ENCODE measurements at regions of chr12 and their contacts with region 1.

Region 1: GRCh38 chr12:47837190-47838171 is 17.8 kb upstream of the HDAC7 start:
- DNase-seq: peak; percentile 62 to 89 (median 76)
- H3K4me3 ChIP-seq: no peak overlapping the region
- H3K27ac ChIP-seq: peak overlapping the region in 3 of 5 donors; percentile 2 to 46 (median 18)
- H3K4me1 ChIP-seq: peaks cover 7 to 17% of the 10 kb centered on the region in 2 donors
- H3K27me3 ChIP-seq: no peaks in the 10 kb centered on the region
- CTCF ChIP-seq: peak; percentile 91 to 98 (median 94)
- POLR2A ChIP-seq: no peak

Region 2: DNA sequence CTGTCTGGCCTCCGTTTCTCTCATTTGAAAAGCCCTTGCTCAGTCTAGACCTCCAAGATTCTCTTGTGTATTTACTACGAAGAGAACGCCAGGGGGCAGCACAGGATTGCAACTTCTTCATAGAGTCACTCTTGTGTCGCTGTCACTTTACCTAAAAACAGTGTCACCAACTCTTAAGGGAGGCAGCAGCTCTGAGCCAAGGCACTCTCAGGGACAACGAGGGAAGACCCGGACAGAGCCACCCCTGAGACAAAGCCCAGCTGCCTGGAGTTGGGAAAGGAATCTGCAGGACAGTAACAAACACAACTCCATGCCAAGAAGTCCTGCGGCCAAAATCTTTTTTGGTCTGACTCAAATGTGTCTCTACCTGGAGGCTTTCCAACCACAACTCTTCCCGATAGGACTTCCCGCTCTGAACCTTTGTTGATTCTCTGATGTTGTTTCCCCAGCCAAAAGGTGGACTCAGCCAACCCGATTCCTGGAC is 122.0 kb before region 1 on chr12:
- intact Hi-C with region 1: loop called in 1 of 2 experiments (anchors 5 kb)
- DNase-seq: peak; percentile 80 to 93 (median 86)
- H3K4me3 ChIP-seq: no peak overlapping the region
- H3K27ac ChIP-seq: peak overlapping the region in 3 of 5 donors; percentile 63 to 82 (median 71)
- H3K4me1 ChIP-seq: peaks cover 24 to 37% of the 10 kb centered on the region in 2 donors
- H3K27me3 ChIP-seq: no peaks in the 10 kb centered on the region
- CTCF ChIP-seq: peak; percentile 60 to 93 (median 88)
- POLR2A ChIP-seq: no peak

Region 3: DNA sequence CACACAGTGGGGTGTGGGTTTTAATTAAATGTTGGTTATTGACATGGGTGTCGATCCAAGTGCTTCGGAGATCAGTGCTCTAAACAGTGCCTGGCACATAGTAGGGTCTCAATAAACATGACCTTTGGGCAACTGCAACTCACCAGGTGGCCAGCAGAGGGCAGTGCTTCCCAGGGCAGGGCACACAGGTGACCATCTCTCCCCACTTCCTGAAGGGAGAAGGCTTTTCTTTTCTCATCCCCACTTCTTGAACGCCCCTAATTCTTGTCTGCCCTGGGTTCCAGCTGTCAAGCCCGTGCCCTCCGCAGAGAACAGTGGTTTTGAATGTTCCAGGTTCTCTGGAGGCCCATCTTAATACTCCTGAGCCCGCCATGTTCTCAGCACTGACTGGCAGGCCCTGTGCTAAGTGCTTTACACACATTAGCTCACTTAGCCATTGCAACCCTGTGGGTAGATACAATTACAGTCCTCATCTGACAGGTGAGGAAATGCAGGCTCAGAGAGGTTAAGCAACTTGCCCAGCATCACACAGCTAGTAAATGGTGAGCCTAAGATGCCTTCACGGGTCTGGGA is 95.1 kb before region 1 on chr12:
- intact Hi-C with region 1: loop called in 1 of 2 experiments (anchors 2 kb)
- DNase-seq: peak in 6 of 7 donors; percentile 50 to 78 (median 61)
- H3K4me3 ChIP-seq: no peak overlapping the region
- H3K27ac ChIP-seq: no peak overlapping the region
- H3K4me1 ChIP-seq: peaks cover 8 to 24% of the 10 kb centered on the region in 2 donors
- H3K27me3 ChIP-seq: no peaks in the 10 kb centered on the region
- CTCF ChIP-seq: peak; percentile 91 to 98 (median 94)
- POLR2A ChIP-seq: no peak

Region 4: DNA sequence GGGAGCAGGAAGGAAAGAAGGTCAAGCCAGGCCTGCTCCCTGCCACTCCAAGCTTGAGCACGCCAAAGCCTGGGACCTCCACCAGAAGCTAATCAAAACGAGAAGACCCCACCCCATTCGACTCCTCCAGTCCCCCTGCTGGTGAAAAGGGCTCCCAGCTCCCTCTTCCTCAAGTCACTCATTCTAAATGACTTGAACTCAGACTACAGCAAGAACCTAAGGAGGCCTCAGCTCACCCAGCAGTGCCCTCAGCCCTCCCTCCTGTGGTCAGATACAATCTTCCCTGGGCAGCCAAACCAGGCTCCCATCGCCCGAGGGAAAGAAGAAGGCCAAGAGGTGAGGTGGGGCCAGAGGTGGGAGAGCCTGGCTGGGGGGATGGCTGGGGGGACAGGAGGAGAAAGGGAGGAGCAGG is 35.2 kb before region 1 on chr12:
- intact Hi-C with region 1: loop called in 1 of 2 experiments (anchors 5 kb)
- DNase-seq: no peak
- H3K4me3 ChIP-seq: no peak overlapping the region
- H3K27ac ChIP-seq: peak overlapping the region in 3 of 5 donors; percentile 25 to 78 (median 67)
- H3K4me1 ChIP-seq: peaks cover 39 to 85% of the 10 kb centered on the region in 2 donors
- H3K27me3 ChIP-seq: no peaks in the 10 kb centered on the region
- CTCF ChIP-seq: no peak
- POLR2A ChIP-seq: no peak